ENCODE measurements at regions of chr9 and their contacts with region 1.

Region 1: DNA sequence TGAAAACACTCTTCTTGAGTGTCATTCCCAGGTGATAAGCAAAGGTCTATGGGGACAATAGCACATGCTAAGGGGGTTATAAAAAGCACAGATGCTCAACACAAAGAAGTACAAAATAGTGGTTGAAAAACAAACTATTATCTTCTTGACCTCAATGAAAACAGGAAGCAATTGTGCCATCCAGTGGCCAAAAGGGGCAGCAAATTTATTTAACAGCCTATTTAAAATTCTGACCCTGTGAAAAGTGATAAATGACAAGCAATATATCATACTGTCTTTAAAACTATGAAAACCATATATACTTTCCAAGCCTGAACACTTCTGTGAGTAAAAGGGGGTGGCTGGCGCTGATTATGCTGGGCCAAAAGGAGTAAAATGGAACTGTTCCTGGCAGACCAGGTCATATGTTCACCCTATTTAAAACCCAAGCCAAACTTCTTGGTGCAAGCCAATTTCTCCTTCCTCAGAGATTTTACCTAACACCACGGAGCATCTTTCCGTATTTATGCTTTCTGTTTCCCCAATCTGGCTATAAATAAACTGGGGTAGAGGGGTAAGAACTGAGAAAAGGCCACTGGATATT is 29.7 kb downstream of the TEX10 start:
- DNase-seq: peak; percentile 52
- H3K4me3 ChIP-seq: no peak overlapping the region
- H3K27ac ChIP-seq: no peak overlapping the region
- H3K4me1 ChIP-seq: no peaks in the 10 kb centered on the region
- H3K27me3 ChIP-seq: no peaks in the 10 kb centered on the region
- CTCF ChIP-seq: peak; percentile 38 to 50
- POLR2A ChIP-seq: no peak

Region 2: DNA sequence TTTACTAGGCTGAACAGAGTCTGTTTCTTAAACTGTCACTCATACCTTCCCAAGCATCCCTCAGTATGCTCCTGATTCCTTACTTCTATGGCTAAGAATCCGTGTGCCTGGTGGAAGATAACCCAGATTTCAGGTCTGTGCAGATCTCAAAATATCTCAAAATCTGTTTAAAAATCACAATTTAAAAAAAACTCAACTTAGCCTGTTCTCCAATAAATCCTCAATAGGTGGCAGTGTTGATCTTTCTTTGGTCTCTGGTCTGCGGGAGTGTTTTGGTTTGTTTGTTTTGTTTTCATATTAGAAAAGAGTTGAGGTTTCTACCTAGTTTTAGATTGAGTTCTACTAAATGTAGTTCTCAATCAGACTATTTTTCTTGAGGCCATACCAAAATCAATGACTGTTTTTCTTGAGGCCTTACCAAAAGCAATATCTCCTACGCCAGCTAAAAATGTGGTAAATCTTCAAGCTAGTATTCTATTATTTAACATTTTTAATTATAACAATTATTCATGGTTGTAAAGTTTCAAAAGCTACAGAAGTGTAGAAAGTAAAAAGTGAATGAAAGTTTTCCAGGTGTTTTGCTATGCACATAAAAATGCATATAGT is 1160.2 kb before region 1 on chr9:
- CTCF ChIA-PET with region 1: interaction called, 14 read pairs
- POLR2A ChIA-PET with region 1: no interaction called
- dilution Hi-C with region 1: no loop called
- intact Hi-C with region 1: loop called (anchors 1 kb)
- DNase-seq: peak; percentile 62
- H3K4me3 ChIP-seq: no peak overlapping the region
- H3K27ac ChIP-seq: no peak overlapping the region
- H3K4me1 ChIP-seq: peaks cover 3% of the 10 kb centered on the region
- H3K27me3 ChIP-seq: peaks cover 2 to 7% of the 10 kb centered on the region in 2 experiments
- CTCF ChIP-seq: peak; percentile 43 to 44
- POLR2A ChIP-seq: no peak

Region 3: GRCh38 chr9:99579964-99580363 is 743.1 kb before region 1 on chr9:
- CTCF ChIA-PET with region 1: no interaction called
- POLR2A ChIA-PET with region 1: no interaction called
- dilution Hi-C with region 1: no loop called
- intact Hi-C with region 1: no loop called
- DNase-seq: no peak
- H3K4me3 ChIP-seq: no peak overlapping the region
- H3K27ac ChIP-seq: no peak overlapping the region
- H3K4me1 ChIP-seq: no peaks in the 10 kb centered on the region
- H3K27me3 ChIP-seq: no peaks in the 10 kb centered on the region
- CTCF ChIP-seq: no peak
- POLR2A ChIP-seq: no peak

Region 4: DNA sequence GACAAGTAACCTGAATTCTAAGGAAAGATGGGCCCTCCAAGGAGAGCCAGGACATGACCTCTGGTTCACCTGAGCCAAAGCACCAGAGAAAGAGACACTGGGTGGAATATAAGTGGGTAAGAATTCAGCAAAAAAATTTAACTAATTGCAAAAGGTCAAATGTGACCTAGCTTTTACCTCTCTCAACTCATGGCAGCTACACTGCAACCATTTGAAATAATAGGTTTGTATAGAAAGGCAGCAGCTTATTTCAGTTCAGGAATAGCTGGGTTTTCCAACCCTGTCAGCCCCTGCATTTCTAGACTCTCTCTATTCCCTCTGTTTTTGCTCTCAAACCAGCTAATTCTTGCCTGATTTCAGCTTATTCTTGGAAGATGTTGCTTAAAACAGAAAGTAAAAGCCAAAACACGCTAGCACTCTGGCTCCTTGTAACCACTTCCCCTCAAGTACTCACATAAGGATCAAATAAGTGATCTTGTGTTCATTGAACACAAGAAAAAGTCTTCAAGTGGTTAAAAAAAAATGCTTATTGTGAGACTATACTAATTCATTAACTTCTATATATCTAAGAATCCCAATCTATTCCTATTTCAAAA is 602.5 kb before region 1 on chr9:
- CTCF ChIA-PET with region 1: no interaction called
- POLR2A ChIA-PET with region 1: no interaction called
- dilution Hi-C with region 1: no loop called
- intact Hi-C with region 1: no loop called
- DNase-seq: no peak
- H3K4me3 ChIP-seq: no peak overlapping the region
- H3K27ac ChIP-seq: no peak overlapping the region
- H3K4me1 ChIP-seq: no peaks in the 10 kb centered on the region
- H3K27me3 ChIP-seq: peaks cover 0 to 1% of the 10 kb centered on the region in 2 experiments
- CTCF ChIP-seq: no peak
- POLR2A ChIP-seq: no peak

Region 5: DNA sequence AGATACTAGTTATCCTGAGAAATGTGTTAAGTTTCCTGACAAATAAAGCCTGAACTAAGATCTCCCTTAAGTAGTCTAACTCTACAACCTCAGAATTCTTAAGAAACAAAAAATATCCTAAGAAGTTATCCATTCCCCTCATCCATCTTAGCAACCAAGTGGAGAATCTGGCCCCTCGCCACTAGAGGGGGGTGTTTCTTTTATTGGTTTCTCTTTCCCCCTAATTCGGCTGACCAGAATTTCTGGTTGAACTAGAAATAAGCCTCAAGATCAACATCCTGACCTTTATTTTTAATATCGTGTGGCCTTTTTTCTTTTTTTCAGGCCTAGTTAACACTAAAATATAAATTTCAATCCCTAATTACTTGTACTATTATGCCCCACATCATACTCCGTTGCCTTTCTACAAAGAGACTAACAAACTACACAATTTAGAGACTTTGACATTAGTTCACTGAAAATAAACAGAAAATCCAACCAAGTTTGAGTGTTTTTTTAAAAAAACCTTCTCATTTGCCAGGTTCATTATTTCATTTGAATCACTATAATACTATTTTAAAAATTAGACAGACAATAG is 515.7 kb before region 1 on chr9:
- CTCF ChIA-PET with region 1: interaction called, 4 read pairs
- POLR2A ChIA-PET with region 1: no interaction called
- dilution Hi-C with region 1: no loop called
- intact Hi-C with region 1: loop called (anchors 1 kb)
- DNase-seq: peak; percentile 61
- H3K4me3 ChIP-seq: no peak overlapping the region
- H3K27ac ChIP-seq: no peak overlapping the region
- H3K4me1 ChIP-seq: no peaks in the 10 kb centered on the region
- H3K27me3 ChIP-seq: no peaks in the 10 kb centered on the region
- CTCF ChIP-seq: peak; percentile 70 to 72
- POLR2A ChIP-seq: no peak

Region 6: DNA sequence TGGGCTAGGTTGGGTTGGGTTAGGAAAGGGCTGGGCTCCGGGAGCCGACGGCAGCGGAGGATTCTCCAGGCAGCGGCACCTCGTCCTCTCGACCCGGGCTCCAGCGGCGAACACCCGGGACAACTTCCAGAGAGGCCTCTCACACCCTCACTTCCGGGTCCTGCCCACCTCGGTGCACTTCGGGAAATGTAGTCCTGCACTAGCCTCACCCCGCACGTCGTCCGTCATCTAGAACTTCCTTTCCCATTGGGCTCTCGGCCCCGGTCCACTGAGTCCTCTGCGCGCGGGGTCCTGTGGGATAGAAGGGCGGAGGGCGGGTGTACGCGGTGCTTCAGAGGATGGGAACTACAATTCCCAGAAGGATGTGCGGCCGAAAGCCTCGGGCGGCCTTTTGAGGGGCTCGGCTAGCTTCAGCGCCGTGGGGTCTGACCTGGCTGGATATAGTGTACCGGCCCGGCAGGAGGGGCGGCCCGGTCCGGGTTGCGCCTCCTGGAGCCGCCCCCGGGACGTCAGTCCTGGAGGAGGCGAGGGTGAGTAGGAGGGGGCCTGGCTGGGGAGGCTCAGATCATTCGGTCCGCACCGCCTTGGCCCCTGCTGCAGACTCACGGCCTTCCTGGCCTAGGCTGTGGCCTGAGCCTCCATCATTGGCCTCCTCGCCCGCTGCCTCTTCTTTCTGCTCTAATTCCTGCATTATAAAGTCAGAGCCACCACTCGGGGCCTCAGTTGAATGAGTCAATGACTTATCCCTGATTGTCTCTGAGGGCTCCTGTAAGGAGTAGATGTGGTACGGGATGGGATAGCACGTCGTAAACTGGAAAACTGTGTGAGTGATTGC is 223.9 kb before region 1 on chr9 and contains the starts of genes ERP44 and INVS:
- CTCF ChIA-PET with region 1: interaction called, 3 read pairs
- POLR2A ChIA-PET with region 1: interaction called, 3 read pairs
- dilution Hi-C with region 1: no loop called
- intact Hi-C with region 1: loop called (anchors 1 kb)
- DNase-seq: peak; percentile 99
- H3K4me3 ChIP-seq: peak within 1 kb of the TSS; percentile 63 to 85 (median 76)
- H3K27ac ChIP-seq: peak within 1 kb of the TSS; percentile 74
- H3K4me1 ChIP-seq: peaks cover 20% of the 10 kb centered on the region
- H3K27me3 ChIP-seq: no peaks in the 10 kb centered on the region
- CTCF ChIP-seq: no peak
- POLR2A ChIP-seq: peak; percentile 93
- total RNA-seq, gene ERP44: 19.3 and 21.4 TPM in 2 replicates
- total RNA-seq, gene INVS: 17.9 and 20.3 TPM in 2 replicates

Region 7: GRCh38 chr9:100298378-100298777 is 24.7 kb before region 1 on chr9:
- CTCF ChIA-PET with region 1: interaction called, 19 read pairs
- POLR2A ChIA-PET with region 1: no interaction called
- dilution Hi-C with region 1: no loop called
- intact Hi-C with region 1: no loop called
- DNase-seq: no peak
- H3K4me3 ChIP-seq: no peak overlapping the region
- H3K27ac ChIP-seq: no peak overlapping the region
- H3K4me1 ChIP-seq: no peaks in the 10 kb centered on the region
- H3K27me3 ChIP-seq: no peaks in the 10 kb centered on the region
- CTCF ChIP-seq: no peak
- POLR2A ChIP-seq: no peak

Region 8: DNA sequence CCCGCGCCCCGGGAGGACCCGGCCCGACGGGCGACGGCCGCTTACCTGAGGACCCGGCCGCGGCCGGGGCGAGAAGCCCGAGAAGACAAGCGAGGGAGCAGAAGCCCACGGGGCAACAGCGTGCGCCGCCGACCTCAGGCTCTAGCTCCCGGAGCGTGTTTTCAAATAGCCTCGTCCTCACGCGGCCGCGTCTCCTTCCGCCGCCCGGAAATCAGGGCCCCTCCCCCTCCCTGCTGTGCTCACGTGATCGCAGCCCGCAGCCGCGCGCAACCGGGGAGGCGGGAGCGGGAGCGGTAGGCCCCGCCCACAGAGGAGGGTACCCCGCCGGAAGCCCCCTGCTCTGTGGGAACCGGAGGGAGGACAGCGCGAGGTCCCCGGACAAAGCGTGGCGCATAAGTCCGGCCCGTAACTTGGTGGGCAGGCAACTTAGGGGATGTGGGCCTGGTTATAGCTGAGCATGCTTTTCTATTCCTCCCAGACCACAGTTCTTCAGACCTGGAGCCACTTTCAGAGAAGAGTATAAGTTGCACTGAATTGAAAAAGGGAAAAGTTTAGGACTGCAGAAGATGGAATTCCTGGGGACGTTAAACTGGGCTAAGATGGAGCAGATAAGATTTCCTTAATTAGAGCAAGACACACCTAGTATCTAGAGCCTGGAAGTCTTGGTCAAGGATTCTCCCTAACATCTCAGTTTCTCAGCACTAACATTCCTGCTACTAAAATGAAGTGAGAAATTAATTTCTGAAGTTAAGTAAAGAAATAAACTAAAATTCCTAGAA is 29.9 kb after region 1 on chr9 and contains the start of gene TEX10:
- CTCF ChIA-PET with region 1: interaction called, 30 read pairs
- POLR2A ChIA-PET with region 1: no interaction called
- dilution Hi-C with region 1: no loop called
- intact Hi-C with region 1: no loop called
- DNase-seq: peak; percentile 91
- H3K4me3 ChIP-seq: peak within 1 kb of the TSS; percentile 47 to 89 (median 88)
- H3K27ac ChIP-seq: peak within 1 kb of the TSS; percentile 69
- H3K4me1 ChIP-seq: peaks cover 10% of the 10 kb centered on the region
- H3K27me3 ChIP-seq: no peaks in the 10 kb centered on the region
- CTCF ChIP-seq: no peak
- POLR2A ChIP-seq: peak; percentile 59
- total RNA-seq, gene TEX10: 20.5 and 21.2 TPM in 2 replicates

Region 9: GRCh38 chr9:100437860-100438805 is 115.1 kb after region 1 on chr9:
- CTCF ChIA-PET with region 1: interaction called, 27 read pairs
- POLR2A ChIA-PET with region 1: no interaction called
- dilution Hi-C with region 1: loop called (anchors 25 kb)
- intact Hi-C with region 1: loop called (anchors 5 kb)
- DNase-seq: peak; percentile 83
- H3K4me3 ChIP-seq: no peak overlapping the region
- H3K27ac ChIP-seq: no peak overlapping the region
- H3K4me1 ChIP-seq: no peaks in the 10 kb centered on the region
- H3K27me3 ChIP-seq: no peaks in the 10 kb centered on the region
- CTCF ChIP-seq: peak; percentile 75 to 87
- POLR2A ChIP-seq: no peak